Calu3 (cell line): ENCODE measurements at regions of chr3 and their contacts with region 1.

Region 1: GRCh38 chr3:133040696-133041523 is 2.7 kb downstream of the TMEM108 start:
- DNase-seq: peak; percentile 92
- H3K4me3 Mint-ChIP-seq: no peak overlapping the region
- H3K27ac Mint-ChIP-seq: no peak overlapping the region
- H3K4me1 Mint-ChIP-seq: no peaks in the 10 kb centered on the region
- H3K27me3 Mint-ChIP-seq: peaks cover 81% of the 10 kb centered on the region
- CTCF ChIP-seq: peak; percentile 93

Region 2: DNA sequence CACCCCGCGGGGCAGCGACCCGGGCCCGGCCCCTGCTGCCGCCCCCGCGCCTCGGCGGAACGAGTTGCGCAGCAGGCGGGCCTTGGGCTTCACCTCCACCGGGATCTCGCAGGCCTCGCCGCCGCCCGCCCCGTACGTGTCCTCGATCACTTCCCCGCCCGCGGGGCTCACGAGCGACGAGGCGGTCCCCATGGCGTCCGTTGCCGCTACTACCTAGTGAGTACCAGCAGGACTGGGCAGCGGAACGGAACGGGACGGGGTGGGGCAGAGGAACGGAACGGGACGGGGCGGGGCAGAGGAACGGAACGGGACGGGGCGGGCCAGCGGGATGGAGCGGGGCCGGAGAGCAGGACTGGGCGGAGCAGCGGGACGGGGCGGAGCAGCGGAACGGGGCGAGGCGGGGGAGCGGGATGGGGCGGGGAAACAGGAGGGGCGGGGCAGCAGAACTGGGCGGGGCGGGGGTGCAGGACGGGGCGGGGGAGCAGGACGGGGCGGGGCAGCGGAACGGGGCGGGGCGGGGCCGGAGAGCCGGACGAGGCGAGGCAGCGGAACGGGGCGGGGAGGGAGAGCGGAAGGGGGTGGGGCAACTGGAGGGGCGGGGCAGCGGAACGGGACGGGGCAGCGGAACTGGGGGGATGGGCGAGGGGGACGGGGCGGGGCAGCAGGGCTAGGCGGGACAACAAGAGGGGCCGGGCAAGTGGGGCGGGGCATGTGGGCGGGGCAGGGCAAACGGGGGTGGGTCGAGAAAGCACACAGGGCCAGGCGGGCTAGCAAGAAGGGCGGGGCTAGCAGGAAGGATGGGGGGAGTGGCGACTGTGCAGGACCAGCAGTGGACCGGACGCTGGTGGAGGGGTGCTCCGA is 318.5 kb before region 1 on chr3 and contains the start of gene NPHP3:
- CTCF ChIA-PET with region 1: no interaction called
- intact Hi-C with region 1: loop called (anchors 2 kb)
- DNase-seq: peak; percentile 99
- H3K4me3 Mint-ChIP-seq: peak within 1 kb of the TSS; percentile 84
- H3K27ac Mint-ChIP-seq: peak within 1 kb of the TSS; percentile 84
- H3K4me1 Mint-ChIP-seq: peaks cover 30% of the 10 kb centered on the region
- H3K27me3 Mint-ChIP-seq: peaks cover 9% of the 10 kb centered on the region
- CTCF ChIP-seq: no peak
- total RNA-seq, gene NPHP3: 34.4 and 40.3 TPM in 2 replicates

Region 3: GRCh38 chr3:132961991-132962390 is 78.9 kb before region 1 on chr3:
- CTCF ChIA-PET with region 1: no interaction called
- intact Hi-C with region 1: no loop called
- DNase-seq: no peak
- H3K4me3 Mint-ChIP-seq: no peak overlapping the region
- H3K27ac Mint-ChIP-seq: no peak overlapping the region
- H3K4me1 Mint-ChIP-seq: no peaks in the 10 kb centered on the region
- H3K27me3 Mint-ChIP-seq: peaks cover 22% of the 10 kb centered on the region
- CTCF ChIP-seq: no peak

Region 4: GRCh38 chr3:133268726-133269134 is 227.8 kb after region 1 on chr3:
- CTCF ChIA-PET with region 1: no interaction called
- intact Hi-C with region 1: loop called (anchors 5 kb)
- DNase-seq: no peak
- H3K4me3 Mint-ChIP-seq: no peak overlapping the region
- H3K27ac Mint-ChIP-seq: no peak overlapping the region
- H3K4me1 Mint-ChIP-seq: peaks cover 9% of the 10 kb centered on the region
- H3K27me3 Mint-ChIP-seq: peaks cover 87% of the 10 kb centered on the region
- CTCF ChIP-seq: no peak

Region 5: DNA sequence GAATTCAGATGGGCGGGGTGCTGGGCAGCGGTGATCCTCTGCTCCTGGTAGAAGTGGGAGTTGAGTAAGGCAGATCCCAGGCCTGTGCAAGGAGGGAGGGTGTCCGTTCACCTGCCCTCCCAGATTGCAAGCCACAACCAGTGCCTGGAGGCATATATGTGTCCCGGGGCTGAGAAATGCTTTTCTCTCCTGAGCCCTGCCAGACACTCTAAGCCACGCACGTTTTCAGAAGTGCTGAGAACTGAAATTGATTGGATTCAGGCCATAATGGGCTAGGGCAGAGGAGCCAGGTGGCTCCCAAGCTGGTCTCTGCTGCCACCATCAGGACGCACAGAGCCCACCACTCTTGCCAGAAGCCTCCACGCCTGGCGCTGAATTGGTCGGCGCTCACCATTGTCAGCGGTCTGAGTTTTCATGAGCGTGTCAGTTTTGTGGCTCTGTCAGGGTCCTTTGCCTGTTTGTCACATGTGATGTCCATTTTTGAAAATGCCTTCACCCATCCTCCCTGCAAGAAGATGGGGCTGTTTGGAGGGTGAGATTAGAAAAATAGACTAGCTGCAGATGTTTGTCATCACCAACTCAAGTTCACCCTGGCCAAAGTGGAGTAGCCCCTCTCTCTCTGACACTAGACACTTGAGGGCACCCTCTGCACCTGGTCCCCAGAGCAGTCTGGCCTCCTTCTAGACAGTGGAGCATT is 343.6 kb after region 1 on chr3:
- CTCF ChIA-PET with region 1: interaction called, 53 read pairs
- intact Hi-C with region 1: loop called (anchors 1 kb)
- DNase-seq: peak; percentile 86
- H3K4me3 Mint-ChIP-seq: no peak overlapping the region
- H3K27ac Mint-ChIP-seq: no peak overlapping the region
- H3K4me1 Mint-ChIP-seq: peaks cover 34% of the 10 kb centered on the region
- H3K27me3 Mint-ChIP-seq: peaks cover 68% of the 10 kb centered on the region
- CTCF ChIP-seq: peak; percentile 96

Region 6: GRCh38 chr3:133578548-133579191 is 537.8 kb after region 1 on chr3:
- CTCF ChIA-PET with region 1: interaction called, 4 read pairs
- intact Hi-C with region 1: loop called (anchors 5 kb)
- DNase-seq: peak; percentile 51
- H3K4me3 Mint-ChIP-seq: peak overlapping the region; percentile 95
- H3K27ac Mint-ChIP-seq: no peak overlapping the region
- H3K4me1 Mint-ChIP-seq: peaks cover 50% of the 10 kb centered on the region
- H3K27me3 Mint-ChIP-seq: no peaks in the 10 kb centered on the region
- CTCF ChIP-seq: peak; percentile 78